ENCODE measurements at regions of chr17 and their contacts with region 1.

Region 1: GRCh38 chr17:45385331-45385997 is 47.2 kb downstream of the ARHGAP27 start:
- DNase-seq: peak; percentile 92
- ATAC-seq: peak; percentile 97
- H3K4me3 Mint-ChIP-seq: no peak overlapping the region
- H3K27ac Mint-ChIP-seq: no peak overlapping the region
- H3K4me1 Mint-ChIP-seq: peaks cover 25% of the 10 kb centered on the region
- H3K27me3 Mint-ChIP-seq: peaks cover 7% of the 10 kb centered on the region

Region 2: DNA sequence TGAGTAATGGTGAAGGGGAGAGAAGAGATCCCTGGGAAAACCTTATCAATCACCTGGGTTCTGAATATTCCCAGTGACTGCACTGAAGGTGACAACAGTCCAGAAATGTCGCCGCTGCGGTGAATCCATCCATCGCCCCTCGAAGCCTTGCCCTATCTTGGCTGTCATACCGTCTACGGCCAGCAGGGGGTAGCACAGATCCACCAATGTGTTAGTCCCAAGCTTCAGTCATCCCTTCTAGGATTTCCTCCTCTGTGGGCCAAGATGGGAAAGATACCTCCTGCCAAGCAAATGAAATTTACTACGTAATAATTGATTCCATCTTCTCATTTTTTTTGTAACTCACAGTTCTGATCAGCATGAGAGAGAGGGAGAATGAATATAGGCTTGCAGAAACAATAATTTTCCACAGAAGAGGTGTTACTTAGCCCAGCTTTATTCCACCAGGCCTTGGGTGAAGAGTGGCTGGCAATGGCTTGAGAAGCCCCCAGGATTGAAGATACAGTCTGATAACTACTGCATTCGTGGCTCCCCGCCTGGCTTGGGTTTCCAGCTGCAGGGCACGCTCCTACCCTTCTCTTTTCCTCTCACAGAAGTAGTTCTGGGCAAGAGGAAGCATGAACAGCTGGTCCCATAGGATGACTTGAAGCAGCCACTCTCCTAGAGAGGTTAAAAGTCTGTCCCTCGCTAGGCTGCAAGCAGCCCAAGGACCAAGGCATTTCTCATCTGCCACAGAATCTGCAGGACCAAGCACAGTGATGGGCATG is 166.4 kb before region 1 on chr17:
- CTCF ChIA-PET with region 1: interaction called, 63 read pairs
- DNase-seq: peak; percentile 89
- ATAC-seq: no peak
- H3K4me3 Mint-ChIP-seq: peak overlapping the region; percentile 88
- H3K27ac Mint-ChIP-seq: peak overlapping the region; percentile 62
- H3K4me1 Mint-ChIP-seq: peaks cover 34% of the 10 kb centered on the region
- H3K27me3 Mint-ChIP-seq: no peaks in the 10 kb centered on the region

Region 3: GRCh38 chr17:45247429-45248131 is 137.9 kb before region 1 on chr17:
- CTCF ChIA-PET with region 1: interaction called, 16 read pairs
- DNase-seq: peak; percentile 100
- ATAC-seq: peak; percentile 91
- H3K4me3 Mint-ChIP-seq: peak overlapping the region; percentile 82
- H3K27ac Mint-ChIP-seq: peak overlapping the region; percentile 96
- H3K4me1 Mint-ChIP-seq: peaks cover 60% of the 10 kb centered on the region
- H3K27me3 Mint-ChIP-seq: no peaks in the 10 kb centered on the region

Region 4: GRCh38 chr17:45284176-45285140 is 101.0 kb before region 1 on chr17:
- CTCF ChIA-PET with region 1: interaction called, 222 read pairs
- DNase-seq: peak; percentile 61
- ATAC-seq: no peak
- H3K4me3 Mint-ChIP-seq: no peak overlapping the region
- H3K27ac Mint-ChIP-seq: peak overlapping the region; percentile 79
- H3K4me1 Mint-ChIP-seq: peaks cover 27% of the 10 kb centered on the region
- H3K27me3 Mint-ChIP-seq: no peaks in the 10 kb centered on the region

Region 5: GRCh38 chr17:45311760-45312476 is 73.5 kb before region 1 on chr17:
- CTCF ChIA-PET with region 1: interaction called, 28 read pairs
- DNase-seq: peak; percentile 94
- ATAC-seq: peak; percentile 57
- H3K4me3 Mint-ChIP-seq: peak overlapping the region; percentile 97
- H3K27ac Mint-ChIP-seq: peak overlapping the region; percentile 90
- H3K4me1 Mint-ChIP-seq: peaks cover 70% of the 10 kb centered on the region
- H3K27me3 Mint-ChIP-seq: no peaks in the 10 kb centered on the region

Region 6: DNA sequence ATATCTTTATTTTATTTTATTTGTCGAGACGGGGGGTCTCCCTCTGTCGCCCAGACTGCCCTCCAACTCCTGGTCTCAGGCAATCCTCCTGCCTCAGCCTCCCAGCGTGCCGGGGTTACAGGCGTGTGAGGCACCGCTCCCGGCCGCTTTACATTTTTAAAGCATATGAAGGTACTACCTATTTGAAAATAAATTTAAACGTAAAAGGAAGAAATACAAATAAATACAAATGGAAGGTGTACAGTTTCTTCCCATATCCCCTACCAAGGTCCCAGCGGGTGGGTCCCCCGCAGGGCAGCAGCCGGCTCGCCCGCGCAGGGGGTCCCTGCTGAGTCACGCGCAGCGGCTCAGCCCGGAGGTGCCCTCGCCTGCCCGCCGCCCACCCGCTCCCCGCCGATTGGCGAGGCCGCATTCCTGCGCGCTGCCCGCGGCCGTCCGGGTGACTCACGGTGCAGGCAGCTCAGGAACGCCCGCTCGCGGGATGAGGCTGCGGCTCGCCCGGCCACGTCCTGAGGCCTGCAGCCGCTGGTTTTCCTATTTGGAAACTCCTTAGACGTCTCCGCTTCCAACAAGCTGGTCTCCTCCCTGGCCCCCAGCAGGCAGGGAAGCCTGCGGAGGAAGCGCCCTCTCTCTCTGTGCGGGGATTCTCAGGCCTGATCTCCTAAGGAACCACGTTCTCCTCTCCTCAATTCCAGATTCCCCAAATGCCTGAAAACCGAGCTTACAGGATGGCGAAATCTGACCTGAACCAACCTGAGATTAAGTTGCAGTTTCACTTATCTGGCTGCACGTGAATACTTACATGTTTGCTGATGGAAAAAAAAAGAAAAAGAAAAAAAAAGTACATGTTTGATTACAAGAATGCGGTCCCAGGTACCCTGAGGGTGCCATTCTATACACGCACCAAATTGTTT is 13.8 kb before region 1 on chr17:
- CTCF ChIA-PET with region 1: interaction called, 12 read pairs
- DNase-seq: no peak
- ATAC-seq: peak; percentile 73
- H3K4me3 Mint-ChIP-seq: peak overlapping the region; percentile 47
- H3K27ac Mint-ChIP-seq: no peak overlapping the region
- H3K4me1 Mint-ChIP-seq: peaks cover 16% of the 10 kb centered on the region
- H3K27me3 Mint-ChIP-seq: peaks cover 23% of the 10 kb centered on the region

Region 7: GRCh38 chr17:46139432-46140210 is 754.2 kb after region 1 on chr17:
- CTCF ChIA-PET with region 1: no interaction called
- DNase-seq: no peak
- ATAC-seq: no peak
- H3K4me3 Mint-ChIP-seq: no peak overlapping the region
- H3K27ac Mint-ChIP-seq: no peak overlapping the region
- H3K4me1 Mint-ChIP-seq: peaks cover 81% of the 10 kb centered on the region
- H3K27me3 Mint-ChIP-seq: no peaks in the 10 kb centered on the region